H1 (cell line): ENCODE measurements at regions of chr22 and their contacts with region 1.

Region 1: GRCh38 chr22:37166675-37167066 is 17.0 kb upstream of the IL2RB start:
- DNase-seq: peak in 1 of 2 experiments; percentile 90
- H3K4me3 ChIP-seq: peak overlapping the region in 1 of 4 experiments; percentile 17; a peak in 1 of 8 replicates
- H3K27ac ChIP-seq: no peak overlapping the region
- H3K4me1 ChIP-seq: peaks cover 0 to 11% (median 2%) of the 10 kb centered on the region in 4 experiments; a peak in 4 of 7 replicates
- H3K27me3 ChIP-seq: no peaks in the 10 kb centered on the region; a peak in 1 of 7 replicates
- CTCF ChIP-seq: peak; percentile 87 to 94 (median 92)
- EP300 ChIP-seq: no peak
- POLR2A ChIP-seq: no peak
- RAD21 ChIP-seq: peak; percentile 71 to 83

Region 2: GRCh38 chr22:37121887-37122591 is 44.6 kb before region 1 on chr22:
- CTCF ChIA-PET with region 1: interaction called, 10 read pairs
- POLR2A ChIA-PET with region 1: no interaction called
- DNase-seq: no peak
- H3K4me3 ChIP-seq: no peak overlapping the region
- H3K27ac ChIP-seq: no peak overlapping the region
- H3K4me1 ChIP-seq: peaks cover 0 to 7% (median 2%) of the 10 kb centered on the region in 4 experiments; a peak in 5 of 7 replicates
- H3K27me3 ChIP-seq: 0 out of 7 replicates have a peak, but pooled peaks cover 0 to 2% (median 0%) of the 10 kb centered on the region in 4 experiments
- CTCF ChIP-seq: no peak
- EP300 ChIP-seq: no peak
- POLR2A ChIP-seq: no peak
- RAD21 ChIP-seq: no peak

Region 3: GRCh38 chr22:37148742-37149665 is 17.7 kb before region 1 on chr22:
- CTCF ChIA-PET with region 1: interaction called, 15 read pairs
- POLR2A ChIA-PET with region 1: interaction called, 3 read pairs
- DNase-seq: no peak
- H3K4me3 ChIP-seq: no peak overlapping the region
- H3K27ac ChIP-seq: no peak overlapping the region
- H3K4me1 ChIP-seq: peaks cover 0 to 11% (median 2%) of the 10 kb centered on the region in 4 experiments; a peak in 5 of 7 replicates
- H3K27me3 ChIP-seq: no peaks in the 10 kb centered on the region
- CTCF ChIP-seq: no peak
- EP300 ChIP-seq: no peak
- POLR2A ChIP-seq: no peak
- RAD21 ChIP-seq: no peak

Region 4: GRCh38 chr22:37186228-37186996 is 19.7 kb after region 1 on chr22:
- CTCF ChIA-PET with region 1: interaction called, 10 read pairs
- POLR2A ChIA-PET with region 1: interaction called, 8 read pairs
- DNase-seq: peak in 1 of 2 experiments; percentile 68
- H3K4me3 ChIP-seq: no peak overlapping the region
- H3K27ac ChIP-seq: no peak overlapping the region
- H3K4me1 ChIP-seq: peaks cover 7 to 23% (median 15%) of the 10 kb centered on the region in 4 experiments
- H3K27me3 ChIP-seq: no peaks in the 10 kb centered on the region
- CTCF ChIP-seq: no peak
- EP300 ChIP-seq: no peak
- POLR2A ChIP-seq: no peak
- RAD21 ChIP-seq: no peak